Tibial artery (tissue), 4 donors: ENCODE measurements at regions of chrX and their contacts with region 1.

Region 1: GRCh38 chrX:57595381-57595811 is 3.6 kb downstream of the ZXDB start:
- DNase-seq: no peak
- H3K4me3 ChIP-seq: no peak overlapping the region
- H3K27ac ChIP-seq: peak overlapping the region in 1 of 2 donors; percentile 35
- H3K4me1 ChIP-seq: peaks cover 0 to 24% (median 1%) of the 10 kb centered on the region in 4 donors
- H3K27me3 ChIP-seq: no peaks in the 10 kb centered on the region
- CTCF ChIP-seq: no peak

Region 2: DNA sequence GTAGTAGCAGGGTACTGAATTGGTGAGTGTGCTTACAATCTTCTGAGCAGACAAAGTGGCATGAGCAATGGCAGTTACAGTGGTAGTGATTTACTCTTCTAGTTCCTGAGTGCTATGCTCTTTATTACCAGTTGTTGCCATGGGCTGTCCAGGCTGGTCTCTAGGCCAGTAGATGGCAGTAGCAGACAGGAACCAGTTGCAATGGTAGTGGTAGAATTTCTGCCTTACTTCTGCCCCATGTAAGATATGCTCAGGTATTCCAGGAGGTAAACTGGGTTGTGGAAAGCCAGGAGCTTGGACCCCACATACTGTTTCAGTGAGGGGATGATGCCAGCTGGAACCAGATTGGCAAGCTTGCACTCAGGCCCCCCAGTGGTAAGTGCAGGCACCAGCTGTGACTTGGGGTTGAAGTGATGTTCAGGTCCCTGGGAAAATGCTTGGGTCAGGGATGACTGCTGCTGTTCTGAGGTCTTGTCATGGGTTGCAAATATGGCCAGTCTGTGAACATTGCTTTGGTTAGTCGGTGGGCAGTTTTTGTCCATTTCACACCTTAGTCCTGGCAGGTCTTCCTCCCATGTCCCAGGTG is 66.6 kb before region 1 on chrX:
- intact Hi-C with region 1: no loop called
- DNase-seq: no peak
- H3K4me3 ChIP-seq: no peak overlapping the region
- H3K27ac ChIP-seq: no peak overlapping the region
- H3K4me1 ChIP-seq: no peaks in the 10 kb centered on the region
- H3K27me3 ChIP-seq: no peaks in the 10 kb centered on the region
- CTCF ChIP-seq: no peak

Region 3: GRCh38 chrX:57900975-57901374 is 305.6 kb after region 1 on chrX:
- intact Hi-C with region 1: loop called (anchors 10 kb)
- DNase-seq: no peak
- H3K4me3 ChIP-seq: no peak overlapping the region
- H3K27ac ChIP-seq: peak overlapping the region in 1 of 2 donors; percentile 11
- H3K4me1 ChIP-seq: peaks cover 0 to 22% (median 2%) of the 10 kb centered on the region in 4 donors
- H3K27me3 ChIP-seq: no peaks in the 10 kb centered on the region
- CTCF ChIP-seq: no peak